KBM-7 (cell line): ENCODE measurements at regions of chrX and their contacts with region 1.

Region 1: DNA sequence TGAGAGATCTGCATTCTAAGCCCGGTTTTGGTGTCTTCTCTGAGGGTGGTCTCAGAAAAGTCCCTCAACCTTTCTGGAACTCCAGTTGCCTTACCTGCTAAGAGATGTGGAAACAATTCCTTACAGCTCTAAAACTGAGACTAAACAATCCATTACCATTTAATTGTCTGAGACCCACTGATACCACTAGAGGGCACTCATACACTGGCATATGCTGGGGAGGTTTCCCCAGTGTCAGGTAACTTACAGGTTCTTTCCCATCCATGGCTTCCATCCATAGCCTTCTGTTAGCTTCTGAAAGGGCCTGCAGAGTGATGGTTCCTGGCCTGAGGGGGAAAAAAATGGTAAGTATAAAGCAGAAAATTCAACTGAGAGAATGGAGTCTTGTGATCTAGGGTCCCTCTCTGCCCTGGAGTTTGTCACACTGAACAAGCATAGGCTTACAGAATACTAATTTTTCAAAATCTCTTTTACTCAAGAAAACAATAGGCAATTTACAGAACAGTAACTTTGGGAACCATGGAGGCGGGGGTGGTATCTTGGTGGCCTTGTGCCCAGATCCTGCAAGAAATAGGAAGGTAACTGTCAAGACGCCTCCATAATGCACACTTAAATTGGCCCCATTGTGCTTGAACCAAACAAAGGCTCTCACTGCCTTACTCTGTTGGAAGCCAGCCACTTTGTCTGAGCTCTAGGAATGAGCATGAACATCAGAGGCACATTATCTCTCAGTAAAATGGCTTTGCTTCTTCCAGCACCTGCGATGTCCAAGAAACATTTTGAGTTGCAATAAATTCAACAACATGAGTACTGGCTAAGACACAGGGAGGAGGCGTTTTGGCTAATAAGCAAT is 236.1 kb downstream of the OPHN1 start:
- DNase-seq: peak; percentile 67

Region 2: DNA sequence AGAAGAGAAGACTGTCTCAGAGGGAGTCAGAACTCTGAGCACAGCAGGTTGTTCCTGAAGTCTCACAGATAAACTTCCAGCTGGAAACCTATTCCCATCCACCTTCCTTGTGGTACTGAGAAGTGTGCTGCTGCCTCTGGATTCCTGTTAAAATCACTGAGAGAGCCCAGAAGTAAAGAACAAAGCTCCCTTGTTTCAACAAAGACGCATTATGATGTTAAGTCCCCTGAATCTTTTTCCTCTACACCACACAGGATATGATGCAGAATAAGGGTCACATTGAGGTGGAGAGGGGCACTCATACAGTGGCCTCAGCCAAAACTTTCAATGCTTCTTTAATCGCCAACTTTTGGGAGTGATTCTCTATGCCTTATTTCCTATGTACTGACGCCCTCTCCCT is 84.8 kb before region 1 on chrX:
- in situ Hi-C with region 1: no loop called
- DNase-seq: no peak

Region 3: DNA sequence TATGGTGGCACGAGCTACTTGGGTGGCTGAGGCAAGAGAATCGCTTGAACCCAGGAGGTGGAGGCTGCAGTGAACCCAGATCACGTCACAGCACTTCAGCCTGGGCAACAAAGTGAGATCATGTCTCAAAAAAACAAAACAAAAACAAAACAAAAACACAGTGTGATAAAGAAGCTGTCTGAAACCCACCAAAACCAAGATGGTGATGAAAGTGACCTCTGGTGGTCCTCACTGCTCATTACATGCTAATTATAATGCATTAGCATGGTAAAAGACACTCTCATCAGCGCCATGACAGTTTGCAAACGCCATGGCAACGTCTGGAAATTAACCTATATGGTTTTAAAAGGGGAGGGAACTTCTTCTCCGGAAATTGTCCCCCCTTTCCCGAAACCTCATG is 265.5 kb after region 1 on chrX:
- in situ Hi-C with region 1: loop called (anchors 25 kb)
- DNase-seq: peak; percentile 83

Region 4: GRCh38 chrX:68710870-68711576 is 513.9 kb after region 1 on chrX:
- in situ Hi-C with region 1: loop called (anchors 25 kb)
- DNase-seq: peak; percentile 57

Region 5: DNA sequence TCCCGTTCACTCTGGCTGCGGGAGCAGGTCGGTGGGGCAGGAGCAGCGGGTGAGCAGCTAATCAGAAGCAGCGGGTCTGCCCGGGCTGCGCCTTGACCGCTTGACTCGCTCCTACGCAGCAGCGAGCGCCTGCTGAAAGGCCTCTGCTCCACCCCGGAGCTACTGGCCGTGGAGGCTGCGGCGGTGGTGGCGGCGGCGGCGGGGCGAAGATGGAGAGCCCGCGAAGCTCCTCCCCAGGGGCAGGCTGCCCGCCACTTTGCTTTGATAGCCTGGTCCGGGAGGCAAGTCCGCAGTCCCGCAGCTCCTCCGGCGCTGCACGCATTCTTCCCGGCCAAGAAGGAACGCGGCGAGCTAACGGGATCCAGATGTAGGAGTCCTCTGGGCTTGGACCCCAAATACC is 931.4 kb after region 1 on chrX:
- in situ Hi-C with region 1: no loop called
- DNase-seq: no peak